ENCODE measurements at regions of chr3 and their contacts with region 1.

Region 1: DNA sequence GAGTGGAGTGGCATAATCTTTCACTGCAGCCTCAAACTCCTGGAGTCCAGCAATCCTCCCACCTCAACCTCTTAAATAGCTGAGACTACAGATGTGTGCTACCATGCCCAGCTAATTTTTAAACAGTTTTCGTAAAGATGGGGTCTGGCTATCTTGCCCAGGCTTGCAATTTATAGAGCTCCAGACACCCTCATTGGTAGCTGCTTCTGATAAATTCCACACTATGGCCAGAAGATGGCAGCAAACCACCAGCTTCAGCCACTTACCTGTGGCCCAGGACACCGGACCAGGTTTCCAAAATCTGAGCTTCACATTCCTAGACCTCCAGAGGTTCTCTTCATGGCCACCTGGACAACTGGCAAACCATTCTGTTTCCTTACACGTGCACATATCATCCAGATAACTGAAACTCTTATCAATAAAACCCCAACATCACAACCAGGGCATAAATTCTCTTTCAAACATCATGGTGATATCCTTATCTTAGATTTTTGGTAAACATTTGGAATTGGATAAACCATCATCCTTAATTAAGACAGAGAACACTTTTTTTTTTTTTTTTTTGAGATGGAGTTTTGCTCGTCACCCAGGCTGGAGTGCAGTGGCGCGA is 28.9 kb downstream of the FBXW12 start:
- DNase-seq: peak; percentile 72
- H3K4me3 Mint-ChIP-seq: no peak overlapping the region
- H3K27ac Mint-ChIP-seq: no peak overlapping the region
- H3K4me1 Mint-ChIP-seq: peaks cover 2% of the 10 kb centered on the region
- H3K27me3 Mint-ChIP-seq: peaks cover 3% of the 10 kb centered on the region

Region 2: DNA sequence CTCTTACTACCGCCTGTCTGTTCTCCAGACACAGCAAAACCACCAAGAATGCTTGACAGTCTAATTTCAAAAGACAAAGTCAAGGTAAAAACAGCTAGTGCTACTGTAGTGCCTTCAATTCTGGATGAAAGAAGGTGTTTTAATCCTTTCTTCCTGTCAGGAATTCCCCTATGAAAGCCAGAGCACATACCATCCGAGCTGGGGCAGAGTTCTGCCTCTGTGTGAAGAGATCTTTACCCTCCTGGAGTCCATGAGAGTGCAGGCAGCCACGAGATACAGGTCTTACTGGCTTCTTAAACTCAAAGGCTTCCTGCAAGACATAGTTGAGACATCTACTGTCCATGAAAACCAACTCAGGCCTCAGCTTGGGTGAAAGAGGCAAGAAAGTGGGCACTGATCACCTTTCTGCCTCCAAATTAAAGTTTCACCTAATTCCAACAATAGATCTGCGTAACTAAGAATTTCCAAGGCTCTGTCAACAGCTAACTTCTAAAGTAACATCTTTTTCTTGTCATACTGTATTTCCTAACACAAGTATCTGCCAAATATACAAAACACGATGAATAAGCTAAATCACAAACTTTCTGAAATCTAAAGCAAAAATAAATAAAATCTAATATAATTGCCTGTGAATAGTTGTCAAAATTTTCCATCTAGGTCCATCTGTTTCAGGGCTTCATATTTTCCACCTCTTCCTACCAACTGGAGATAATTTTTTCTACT is 220.2 kb before region 1 on chr3:
- CTCF ChIA-PET with region 1: no interaction called
- POLR2A ChIA-PET with region 1: no interaction called
- DNase-seq: no peak
- H3K4me3 Mint-ChIP-seq: no peak overlapping the region
- H3K27ac Mint-ChIP-seq: no peak overlapping the region
- H3K4me1 Mint-ChIP-seq: peaks cover 25% of the 10 kb centered on the region
- H3K27me3 Mint-ChIP-seq: no peaks in the 10 kb centered on the region

Region 3: DNA sequence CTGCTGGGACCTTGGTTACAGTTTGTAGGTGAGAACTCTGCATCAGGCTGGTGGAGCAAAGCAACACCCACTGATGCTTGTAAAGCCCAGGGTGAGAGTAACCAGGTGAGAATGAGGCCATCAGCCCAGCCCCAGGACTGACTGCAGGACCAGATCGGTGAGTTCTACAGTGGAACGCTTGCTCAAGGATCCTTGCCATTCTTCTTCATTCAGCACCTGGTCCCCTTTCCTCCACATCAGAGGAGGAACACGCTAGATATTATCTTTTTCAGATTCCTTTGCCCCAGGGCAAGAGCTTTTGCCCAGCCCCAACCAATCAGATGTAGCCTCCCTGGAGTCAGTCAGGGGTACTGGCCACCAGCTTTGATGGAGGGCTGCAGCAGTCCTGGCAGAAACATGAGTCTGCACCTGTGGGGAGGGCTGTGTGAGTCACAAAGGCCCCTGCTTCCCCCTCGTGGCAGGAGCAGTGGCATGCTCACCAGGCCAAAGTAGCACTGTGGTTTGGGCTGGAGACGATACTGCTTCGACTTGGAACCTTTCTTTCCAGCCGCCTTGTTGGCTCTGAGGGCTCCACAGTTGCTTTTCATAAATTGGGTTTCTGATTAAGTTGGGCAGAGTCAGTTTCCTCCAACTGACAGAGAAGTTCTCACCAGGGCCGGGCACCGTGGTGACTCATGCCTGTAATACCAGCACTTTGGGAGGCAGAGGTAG is 106.6 kb after region 1 on chr3:
- CTCF ChIA-PET with region 1: interaction called, 11 read pairs
- POLR2A ChIA-PET with region 1: interaction called, 3 read pairs
- DNase-seq: peak; percentile 82
- H3K4me3 Mint-ChIP-seq: no peak overlapping the region
- H3K27ac Mint-ChIP-seq: peak overlapping the region; percentile 83
- H3K4me1 Mint-ChIP-seq: peaks cover 56% of the 10 kb centered on the region
- H3K27me3 Mint-ChIP-seq: peaks cover 16% of the 10 kb centered on the region

Region 4: DNA sequence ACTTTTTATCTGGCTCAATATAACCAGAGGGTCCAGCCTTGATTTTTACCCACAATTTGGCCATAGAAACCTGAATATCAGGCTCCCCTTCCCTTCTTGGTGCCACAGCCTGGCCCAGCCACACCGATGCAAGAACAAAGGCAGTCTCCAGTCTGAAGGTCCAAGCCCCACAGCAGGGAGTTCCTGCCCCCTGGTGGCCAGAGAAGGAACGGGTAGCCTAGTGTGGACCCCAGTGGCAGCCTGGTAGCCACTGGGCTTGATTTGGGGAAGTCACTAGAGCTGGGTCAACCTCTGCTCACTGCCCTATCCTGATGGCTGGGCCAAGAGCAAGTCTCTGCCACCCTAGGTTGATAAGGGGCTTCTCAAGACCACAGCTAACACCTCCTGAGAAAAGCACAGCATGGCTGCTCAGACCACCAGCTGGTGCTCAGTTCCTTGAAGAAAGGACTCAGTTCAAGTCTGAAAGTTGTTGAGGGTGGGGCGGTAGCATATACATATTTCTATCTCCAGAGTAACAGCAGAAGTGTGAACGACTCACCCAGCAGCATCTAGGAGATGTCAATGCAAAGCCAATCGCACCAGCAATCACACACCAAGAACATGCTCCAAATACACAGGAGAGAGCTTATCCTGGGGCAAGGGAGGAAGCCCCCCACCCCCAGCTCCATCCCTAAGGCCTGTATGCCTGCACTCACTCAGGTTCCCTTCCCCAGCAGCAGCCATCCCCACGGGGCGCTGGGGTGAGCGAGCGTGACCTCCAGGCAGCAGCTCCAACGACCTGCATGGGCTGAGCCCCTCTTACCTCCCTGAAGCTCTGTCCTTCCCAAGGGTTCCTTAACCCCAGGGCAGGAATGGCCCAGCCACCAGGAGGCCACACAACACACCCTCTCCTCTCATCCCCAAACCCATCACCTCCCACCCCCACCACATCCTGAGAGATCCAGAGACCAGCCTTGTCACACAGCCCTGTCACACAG is 148.1 kb after region 1 on chr3:
- CTCF ChIA-PET with region 1: interaction called, 68 read pairs
- POLR2A ChIA-PET with region 1: interaction called, 4 read pairs
- DNase-seq: peak; percentile 87
- H3K4me3 Mint-ChIP-seq: no peak overlapping the region
- H3K27ac Mint-ChIP-seq: no peak overlapping the region
- H3K4me1 Mint-ChIP-seq: peaks cover 8% of the 10 kb centered on the region
- H3K27me3 Mint-ChIP-seq: no peaks in the 10 kb centered on the region

Region 5: GRCh38 chr3:48556793-48557626 is 156.1 kb after region 1 on chr3 and contains the start of gene PFKFB4:
- CTCF ChIA-PET with region 1: interaction called, 68 read pairs
- POLR2A ChIA-PET with region 1: interaction called, 6 read pairs
- DNase-seq: peak; percentile 100
- H3K4me3 Mint-ChIP-seq: peak within 1 kb of the TSS; percentile 79
- H3K27ac Mint-ChIP-seq: peak within 1 kb of the TSS; percentile 74
- H3K4me1 Mint-ChIP-seq: peaks cover 49% of the 10 kb centered on the region
- H3K27me3 Mint-ChIP-seq: no peaks in the 10 kb centered on the region
- total RNA-seq, gene PFKFB4: 33.3 to 34.4 TPM

Region 6: GRCh38 chr3:48609088-48610005 is 208.4 kb after region 1 on chr3 and contains the start of gene UQCRC1:
- CTCF ChIA-PET with region 1: interaction called, 10 read pairs
- POLR2A ChIA-PET with region 1: no interaction called
- DNase-seq: peak; percentile 94
- H3K4me3 Mint-ChIP-seq: peak within 1 kb of the TSS; percentile 99
- H3K27ac Mint-ChIP-seq: peak within 1 kb of the TSS; percentile 95
- H3K4me1 Mint-ChIP-seq: peaks cover 31% of the 10 kb centered on the region
- H3K27me3 Mint-ChIP-seq: no peaks in the 10 kb centered on the region
- total RNA-seq, gene UQCRC1: 167 to 170 TPM

Region 7: DNA sequence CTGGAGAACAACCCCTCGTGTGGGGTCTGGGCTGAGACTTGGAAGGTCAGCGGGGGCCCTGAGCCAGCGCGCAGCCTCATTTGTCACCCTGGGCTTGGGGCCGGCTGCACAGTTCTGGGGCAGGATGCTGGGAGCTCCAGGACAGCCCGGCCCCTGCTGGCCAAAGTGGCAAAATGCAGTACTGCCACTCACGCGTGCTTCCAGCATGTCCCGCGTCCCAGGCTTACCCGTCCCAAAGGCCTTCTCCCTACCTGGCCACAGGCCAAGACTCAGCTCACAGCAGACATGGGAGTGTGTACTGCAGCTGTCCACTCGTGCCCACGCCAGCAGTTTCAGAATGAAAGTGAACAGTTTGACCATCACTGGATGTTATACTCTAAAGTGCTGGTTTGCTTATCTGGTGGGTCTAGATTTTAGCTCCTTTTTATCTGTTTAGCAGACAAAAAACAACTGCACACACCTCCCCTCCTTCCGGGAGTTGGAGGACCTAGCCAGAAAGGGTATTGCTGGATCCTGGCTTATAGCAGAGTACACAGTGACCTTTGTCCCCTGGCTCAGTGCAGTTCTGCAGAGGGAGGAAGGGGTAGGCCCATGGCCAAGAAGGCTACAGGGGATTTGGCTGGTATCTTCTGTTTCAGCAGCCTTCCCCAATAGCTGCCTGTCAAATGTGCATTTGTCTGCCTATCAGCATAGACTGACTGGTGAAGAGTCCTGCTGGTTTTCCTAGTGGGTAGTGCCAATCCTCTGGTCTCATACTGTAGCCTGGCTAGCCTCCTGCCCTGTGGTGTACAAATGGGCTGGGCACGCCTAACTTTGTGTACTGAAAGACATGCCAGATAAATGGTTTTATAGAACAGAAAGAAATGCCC is 339.3 kb after region 1 on chr3:
- CTCF ChIA-PET with region 1: interaction called, 13 read pairs
- POLR2A ChIA-PET with region 1: no interaction called
- DNase-seq: peak; percentile 57
- H3K4me3 Mint-ChIP-seq: no peak overlapping the region
- H3K27ac Mint-ChIP-seq: no peak overlapping the region
- H3K4me1 Mint-ChIP-seq: no peaks in the 10 kb centered on the region
- H3K27me3 Mint-ChIP-seq: no peaks in the 10 kb centered on the region